ENCODE measurements at regions of chr1 and their contacts with region 1.

Region 1: GRCh38 chr1:160098852-160099561 is 588 bp upstream of the IGSF8 start:
- DNase-seq: peak; percentile 96 to 100 (median 98)
- H3K4me3 ChIP-seq: peak overlapping the region; percentile 26 to 97 (median 88)
- H3K27ac ChIP-seq: peak overlapping the region; percentile 86 to 100 (median 99)
- H3K27me3 ChIP-seq: no peaks in the 10 kb centered on the region
- CTCF ChIP-seq: peak in 1 of 56 donors; percentile 9

Region 2: GRCh38 chr1:159669338-159669737 is 429.7 kb before region 1 on chr1:
- intact Hi-C with region 1: no loop called
- DNase-seq: no peak
- H3K4me3 ChIP-seq: no peak overlapping the region
- H3K27ac ChIP-seq: no peak overlapping the region
- H3K27me3 ChIP-seq: peaks cover 0 to 4% (median 0%) of the 10 kb centered on the region in 45 donors
- CTCF ChIP-seq: no peak

Region 3: GRCh38 chr1:159991513-159991912 is 107.5 kb before region 1 on chr1:
- intact Hi-C with region 1: no loop called
- DNase-seq: no peak
- H3K4me3 ChIP-seq: no peak overlapping the region
- H3K27ac ChIP-seq: no peak overlapping the region
- H3K27me3 ChIP-seq: peaks cover 0 to 10% (median 0%) of the 10 kb centered on the region in 45 donors
- CTCF ChIP-seq: no peak

Region 4: DNA sequence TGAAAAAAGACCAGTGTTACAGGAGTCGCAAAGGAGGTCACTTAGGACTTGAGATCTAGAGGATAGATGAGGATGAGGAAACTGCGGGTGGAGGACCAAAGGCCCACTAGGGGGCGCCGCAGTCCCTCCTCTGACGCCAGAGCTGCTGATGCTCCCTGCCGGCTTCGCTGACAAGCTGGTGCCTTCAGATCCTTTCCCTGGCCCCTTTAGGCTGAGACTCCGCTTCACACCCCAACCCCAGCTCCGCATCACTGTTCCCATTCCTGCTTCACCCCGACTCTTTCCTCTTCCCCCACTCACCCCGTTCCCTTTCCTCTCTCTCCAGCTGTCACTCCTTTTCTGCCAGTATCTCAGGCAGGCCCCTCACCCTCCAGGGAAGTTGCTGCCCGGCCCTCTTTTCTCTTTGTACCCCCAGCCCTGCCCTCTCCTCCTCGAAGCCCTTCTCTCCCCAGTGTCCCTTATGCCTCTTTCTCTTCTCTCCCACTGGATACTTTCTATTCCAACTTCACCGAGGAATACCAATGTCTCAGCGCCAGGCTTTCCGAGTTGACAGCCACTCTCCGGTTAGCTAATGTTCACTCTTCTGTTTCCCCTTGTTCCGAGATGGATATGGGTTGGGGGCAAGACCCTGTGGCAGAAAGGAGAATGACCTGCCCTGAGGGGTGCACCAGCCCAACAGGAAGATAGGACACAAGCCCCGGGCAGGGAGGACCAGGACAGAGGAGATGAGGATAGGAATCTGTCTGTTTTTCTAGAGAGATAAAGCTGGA is 13.1 kb before region 1 on chr1:
- intact Hi-C with region 1: loop called in 1 of 2 experiments (anchors 2 kb)
- DNase-seq: peak; percentile 92 to 96 (median 95)
- H3K4me3 ChIP-seq: peak overlapping the region in 52 of 59 donors; percentile 6 to 79 (median 34)
- H3K27ac ChIP-seq: peak overlapping the region; percentile 75 to 100 (median 97)
- H3K27me3 ChIP-seq: no peaks in the 10 kb centered on the region
- CTCF ChIP-seq: peak; percentile 67 to 98 (median 94)

Region 5: GRCh38 chr1:160193091-160193819 is 94.2 kb after region 1 on chr1:
- intact Hi-C with region 1: loop called (anchors 1 to 5 kb)
- DNase-seq: peak; percentile 71 to 93 (median 84)
- H3K4me3 ChIP-seq: peak overlapping the region in 57 of 59 donors; percentile 5 to 59 (median 42)
- H3K27ac ChIP-seq: peak overlapping the region in 45 of 59 donors; percentile 10 to 86 (median 65)
- H3K27me3 ChIP-seq: no peaks in the 10 kb centered on the region
- CTCF ChIP-seq: peak; percentile 93 to 99 (median 97)

Region 6: GRCh38 chr1:160251687-160252526 is 152.9 kb after region 1 on chr1:
- intact Hi-C with region 1: loop called (anchors 1 to 2 kb)
- DNase-seq: peak; percentile 40 to 91 (median 81)
- H3K4me3 ChIP-seq: peak overlapping the region in 7 of 59 donors; percentile 0 to 21 (median 2)
- H3K27ac ChIP-seq: peak overlapping the region; percentile 54 to 98 (median 88)
- H3K27me3 ChIP-seq: no peaks in the 10 kb centered on the region
- CTCF ChIP-seq: peak; percentile 71 to 99 (median 86)

Region 7: DNA sequence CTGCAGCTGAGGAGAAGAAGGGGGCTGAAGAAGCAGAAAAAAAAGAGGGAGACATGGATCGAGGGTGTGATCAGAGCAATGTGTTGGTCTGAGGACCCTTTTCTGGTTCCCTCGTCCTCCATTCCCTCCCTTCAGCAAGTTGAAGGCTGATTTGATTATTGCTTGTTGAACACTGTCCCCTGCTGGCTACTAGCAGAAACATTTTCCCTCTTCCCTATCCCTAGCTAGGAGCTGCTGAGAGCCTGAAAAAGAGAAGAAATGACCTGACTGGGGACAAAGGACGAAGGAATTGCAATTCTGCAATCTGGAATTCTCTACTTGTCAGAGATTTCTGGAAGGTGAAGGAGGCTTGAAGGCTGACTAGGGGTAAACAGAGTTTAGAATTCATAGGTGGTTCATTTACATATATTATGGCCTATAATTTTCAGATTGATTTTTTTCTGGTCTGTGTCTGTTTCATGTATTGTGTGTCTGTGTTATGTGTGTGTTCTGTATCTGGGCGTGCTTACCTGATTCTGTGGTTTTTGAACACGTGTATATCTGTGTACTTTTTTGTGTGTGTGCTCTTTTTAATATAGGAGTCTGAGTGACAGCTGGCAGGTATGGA is 277.6 kb after region 1 on chr1:
- intact Hi-C with region 1: loop called (anchors 5 kb)
- DNase-seq: peak in 2 of 10 donors; percentile 50 to 60
- H3K4me3 ChIP-seq: peak overlapping the region in 8 of 59 donors; percentile 2 to 35 (median 16)
- H3K27ac ChIP-seq: peak overlapping the region in 53 of 59 donors; percentile 50 to 92 (median 78)
- H3K27me3 ChIP-seq: no peaks in the 10 kb centered on the region
- CTCF ChIP-seq: peak; percentile 80 to 98 (median 93)

Measured in dorsolateral prefrontal cortex (tissue), 120 donors.